ENCODE measurements at regions of chr9 and their contacts with region 1.

Region 1: DNA sequence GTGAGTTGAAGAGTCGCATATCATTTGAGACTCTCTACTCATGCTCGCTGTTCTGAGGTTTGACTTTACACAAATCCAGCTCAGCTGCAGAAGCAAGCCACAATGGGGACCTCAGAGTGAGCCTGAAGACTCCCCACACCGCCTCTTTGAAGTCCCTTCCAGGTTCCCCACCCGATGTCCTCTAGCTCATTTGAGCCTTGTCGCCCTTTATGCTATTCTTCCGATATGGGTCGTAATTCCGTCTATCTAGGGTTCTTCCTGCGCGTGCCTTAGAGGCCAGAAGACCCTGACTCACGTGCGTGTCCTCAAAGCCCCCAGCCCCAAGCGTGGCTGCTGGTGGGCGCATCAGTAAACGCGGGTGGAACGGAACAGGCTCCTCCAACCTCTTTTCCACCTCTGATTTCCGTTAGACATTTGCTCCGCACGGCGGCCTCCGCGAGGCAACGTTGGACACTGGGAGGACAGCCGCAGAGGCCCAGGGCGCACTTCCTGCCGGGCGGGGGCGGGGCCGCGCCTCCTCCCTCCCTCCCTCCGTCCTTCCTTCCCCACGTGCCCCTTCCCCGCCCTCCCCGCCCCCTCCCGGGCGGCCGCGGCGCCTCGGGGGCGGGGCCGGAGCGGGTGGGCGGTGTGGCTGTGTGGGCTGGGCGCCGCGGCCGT is at the start of gene SNX30:
- DNase-seq: peak; percentile 79
- ATAC-seq: peak; percentile 79
- H3K4me3 ChIP-seq: peak within 1 kb of the TSS; percentile 86 to 97 (median 89)
- H3K27ac ChIP-seq: peak within 1 kb of the TSS; percentile 89
- H3K4me1 ChIP-seq: peaks cover 76% of the 10 kb centered on the region
- H3K27me3 ChIP-seq: no peaks in the 10 kb centered on the region; a peak in 1 of 5 replicates
- CTCF ChIP-seq: peak; percentile 60
- EP300 ChIP-seq: no peak
- POLR2A ChIP-seq: peak; percentile 92 to 93
- RAD21 ChIP-seq: no peak; the same call in 1 of the 2 replicates
- total RNA-seq, gene SNX30: 12.4 and 18.9 TPM in 2 replicates

Region 2: GRCh38 chr9:112520656-112521055 is 229.6 kb before region 1 on chr9:
- CTCF ChIA-PET with region 1: no interaction called
- POLR2A ChIA-PET with region 1: no interaction called
- in situ Hi-C with region 1: no loop called
- intact Hi-C with region 1: no loop called
- DNase-seq: no peak
- ATAC-seq: no peak
- H3K4me3 ChIP-seq: no peak overlapping the region
- H3K27ac ChIP-seq: no peak overlapping the region
- H3K4me1 ChIP-seq: peaks cover 23% of the 10 kb centered on the region
- H3K27me3 ChIP-seq: no peaks in the 10 kb centered on the region
- CTCF ChIP-seq: no peak
- EP300 ChIP-seq: no peak
- POLR2A ChIP-seq: no peak
- RAD21 ChIP-seq: no peak

Region 3: DNA sequence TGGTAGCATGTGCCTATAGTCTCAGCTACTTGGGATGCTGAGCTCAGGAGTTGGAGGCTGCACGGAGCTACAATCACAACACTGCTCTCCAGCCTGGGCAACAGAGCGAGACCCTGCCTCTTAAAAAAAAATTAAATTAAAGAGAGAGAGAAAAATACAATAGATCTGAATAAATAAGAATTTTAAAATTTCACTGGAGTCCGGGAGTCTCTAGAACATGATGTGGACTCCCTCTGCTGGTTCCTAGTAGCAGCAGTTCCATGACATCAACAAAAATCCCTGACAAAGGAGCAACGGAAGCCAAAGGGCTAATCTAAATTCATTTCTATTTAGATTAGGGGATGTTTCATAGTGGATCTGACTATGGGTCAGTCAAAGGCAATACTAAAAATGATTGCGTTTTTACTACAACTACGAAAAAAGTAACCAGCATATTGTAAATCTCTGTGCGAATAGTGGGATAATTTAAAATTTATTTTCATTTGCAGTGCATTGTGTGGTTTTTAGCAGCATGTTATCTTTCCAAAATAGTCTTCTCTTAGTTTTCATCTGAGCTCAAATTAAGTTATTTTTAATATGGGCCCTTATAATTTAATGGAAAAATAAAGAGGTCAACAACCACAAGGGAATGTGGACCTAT is 39.1 kb before region 1 on chr9:
- CTCF ChIA-PET with region 1: no interaction called
- POLR2A ChIA-PET with region 1: no interaction called
- in situ Hi-C with region 1: no loop called
- intact Hi-C with region 1: no loop called
- DNase-seq: peak; percentile 44
- ATAC-seq: no peak; the same call in 2 of the 3 replicates
- H3K4me3 ChIP-seq: no peak overlapping the region
- H3K27ac ChIP-seq: no peak overlapping the region
- H3K4me1 ChIP-seq: peaks cover 8% of the 10 kb centered on the region
- H3K27me3 ChIP-seq: no peaks in the 10 kb centered on the region
- CTCF ChIP-seq: peak; percentile 54
- EP300 ChIP-seq: no peak
- POLR2A ChIP-seq: no peak
- RAD21 ChIP-seq: no peak

Region 4: GRCh38 chr9:112731971-112732370 is 18.3 kb before region 1 on chr9:
- CTCF ChIA-PET with region 1: no interaction called
- POLR2A ChIA-PET with region 1: interaction called, 32 read pairs
- in situ Hi-C with region 1: no loop called
- intact Hi-C with region 1: loop called (anchors 1 kb)
- DNase-seq: peak; percentile 92
- ATAC-seq: peak; percentile 95
- H3K4me3 ChIP-seq: peak overlapping the region; percentile 40 to 60 (median 58); a peak in 4 of 6 replicates
- H3K27ac ChIP-seq: peak overlapping the region; percentile 84
- H3K4me1 ChIP-seq: peaks cover 26% of the 10 kb centered on the region
- H3K27me3 ChIP-seq: no peaks in the 10 kb centered on the region
- CTCF ChIP-seq: no peak
- EP300 ChIP-seq: peak in 1 of 2 experiments; percentile 55; a peak in 1 of 4 replicates
- POLR2A ChIP-seq: peak; percentile 38 to 64; a peak in 3 of 4 replicates
- RAD21 ChIP-seq: no peak

Region 5: GRCh38 chr9:112764344-112764743 is 14.1 kb after region 1 on chr9:
- CTCF ChIA-PET with region 1: no interaction called
- POLR2A ChIA-PET with region 1: interaction called, 35 read pairs
- in situ Hi-C with region 1: no loop called
- intact Hi-C with region 1: loop called (anchors 1 kb)
- DNase-seq: peak; percentile 37
- ATAC-seq: peak; percentile 76
- H3K4me3 ChIP-seq: peak overlapping the region; percentile 32 to 63 (median 35); a peak in 5 of 6 replicates
- H3K27ac ChIP-seq: peak overlapping the region; percentile 67
- H3K4me1 ChIP-seq: peaks cover 38% of the 10 kb centered on the region
- H3K27me3 ChIP-seq: no peaks in the 10 kb centered on the region
- CTCF ChIP-seq: no peak
- EP300 ChIP-seq: no peak
- POLR2A ChIP-seq: no peak
- RAD21 ChIP-seq: no peak

Region 6: GRCh38 chr9:112914514-112914913 is 164.3 kb after region 1 on chr9:
- CTCF ChIA-PET with region 1: no interaction called
- POLR2A ChIA-PET with region 1: no interaction called
- in situ Hi-C with region 1: no loop called
- intact Hi-C with region 1: no loop called
- DNase-seq: no peak
- ATAC-seq: no peak
- H3K4me3 ChIP-seq: no peak overlapping the region
- H3K27ac ChIP-seq: no peak overlapping the region
- H3K4me1 ChIP-seq: no peaks in the 10 kb centered on the region
- H3K27me3 ChIP-seq: no peaks in the 10 kb centered on the region
- CTCF ChIP-seq: no peak
- EP300 ChIP-seq: no peak
- POLR2A ChIP-seq: no peak
- RAD21 ChIP-seq: no peak

Measured in HepG2 (cell line).